Activated B cell treated with CpG ODN at 0.5 μM for 24 hours (primary cell): ENCODE measurements at regions of chr1 and their contacts with region 1.

Region 1: GRCh38 chr1:101238681-101239094 is 1.9 kb downstream of the S1PR1 start:
- DNase-seq: peak; percentile 78
- ATAC-seq: peak; percentile 28
- H3K4me3 Mint-ChIP-seq: peak overlapping the region; percentile 98
- H3K27ac Mint-ChIP-seq: peak overlapping the region; percentile 98
- H3K4me1 Mint-ChIP-seq: peaks cover 70% of the 10 kb centered on the region
- H3K27me3 Mint-ChIP-seq: no peaks in the 10 kb centered on the region
- CTCF ChIP-seq: peak; percentile 58

Region 2: GRCh38 chr1:100895540-100896483 is 342.9 kb before region 1 on chr1 and contains the start of gene SLC30A7:
- CTCF ChIA-PET with region 1: no interaction called
- POLR2A ChIA-PET with region 1: interaction called, 18 read pairs
- intact Hi-C with region 1: no loop called
- DNase-seq: peak; percentile 97
- ATAC-seq: peak; percentile 86
- H3K4me3 Mint-ChIP-seq: peak within 1 kb of the TSS; percentile 98
- H3K27ac Mint-ChIP-seq: peak within 1 kb of the TSS; percentile 95
- H3K4me1 Mint-ChIP-seq: peaks cover 29% of the 10 kb centered on the region
- H3K27me3 Mint-ChIP-seq: no peaks in the 10 kb centered on the region
- CTCF ChIP-seq: no peak
- total RNA-seq, gene SLC30A7: 21.1 and 25.7 TPM in 2 replicates

Region 3: DNA sequence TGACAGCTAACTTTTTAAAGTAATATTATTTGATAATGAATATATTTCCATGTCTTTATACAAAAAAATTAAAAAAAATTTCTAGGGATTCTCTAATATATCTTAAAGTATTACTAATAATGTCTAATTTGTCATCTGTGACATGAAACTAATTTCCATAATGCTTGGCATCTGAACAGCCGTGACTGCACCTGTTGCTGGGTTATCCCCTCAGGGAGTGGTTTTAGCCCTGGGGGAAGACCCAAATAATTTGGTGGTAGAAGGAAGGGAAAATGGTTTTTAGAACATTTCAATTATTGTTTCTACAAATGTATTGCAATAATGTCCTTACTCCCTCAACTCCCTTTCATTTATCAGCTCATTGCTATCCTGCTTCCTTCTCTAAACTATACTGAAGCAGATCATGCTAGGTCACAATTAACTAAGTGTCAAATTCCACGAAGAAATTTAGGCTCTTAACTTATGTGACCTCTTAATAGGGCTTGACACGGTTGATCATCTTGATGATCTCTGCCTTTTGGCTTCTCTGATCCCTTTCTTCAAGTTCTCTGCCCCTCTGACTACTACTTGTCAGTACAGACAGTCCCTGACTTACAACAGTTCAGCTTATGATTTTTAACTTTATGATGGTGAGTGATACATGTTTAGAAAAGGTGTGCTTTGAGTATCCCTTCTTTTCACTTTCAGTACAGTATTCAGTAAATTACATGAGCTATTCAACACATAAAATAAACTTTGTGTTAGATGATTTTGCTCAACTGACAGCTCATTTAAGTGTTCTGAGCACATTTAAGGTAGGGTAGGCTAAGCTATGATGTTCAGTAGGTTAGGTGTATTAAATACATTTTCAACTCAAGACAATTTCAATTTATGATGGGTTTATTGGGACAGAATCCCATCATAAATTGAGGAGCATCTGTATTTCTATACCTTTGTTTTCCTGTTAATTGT is 186.7 kb before region 1 on chr1:
- CTCF ChIA-PET with region 1: interaction called, 5 read pairs
- POLR2A ChIA-PET with region 1: interaction called, 36 read pairs
- intact Hi-C with region 1: loop called (anchors 1 kb)
- DNase-seq: peak; percentile 27
- ATAC-seq: peak; percentile 88
- H3K4me3 Mint-ChIP-seq: peak overlapping the region; percentile 78
- H3K27ac Mint-ChIP-seq: peak overlapping the region; percentile 95
- H3K4me1 Mint-ChIP-seq: peaks cover 70% of the 10 kb centered on the region
- H3K27me3 Mint-ChIP-seq: no peaks in the 10 kb centered on the region
- CTCF ChIP-seq: no peak

Region 4: GRCh38 chr1:101145449-101145820 is 93.3 kb before region 1 on chr1:
- CTCF ChIA-PET with region 1: interaction called, 96 read pairs
- POLR2A ChIA-PET with region 1: interaction called, 60 read pairs
- intact Hi-C with region 1: loop called (anchors 2 kb)
- DNase-seq: no peak
- ATAC-seq: peak; percentile 39
- H3K4me3 Mint-ChIP-seq: peak overlapping the region; percentile 21
- H3K27ac Mint-ChIP-seq: peak overlapping the region; percentile 74
- H3K4me1 Mint-ChIP-seq: peaks cover 15% of the 10 kb centered on the region
- H3K27me3 Mint-ChIP-seq: no peaks in the 10 kb centered on the region
- CTCF ChIP-seq: no peak

Region 5: DNA sequence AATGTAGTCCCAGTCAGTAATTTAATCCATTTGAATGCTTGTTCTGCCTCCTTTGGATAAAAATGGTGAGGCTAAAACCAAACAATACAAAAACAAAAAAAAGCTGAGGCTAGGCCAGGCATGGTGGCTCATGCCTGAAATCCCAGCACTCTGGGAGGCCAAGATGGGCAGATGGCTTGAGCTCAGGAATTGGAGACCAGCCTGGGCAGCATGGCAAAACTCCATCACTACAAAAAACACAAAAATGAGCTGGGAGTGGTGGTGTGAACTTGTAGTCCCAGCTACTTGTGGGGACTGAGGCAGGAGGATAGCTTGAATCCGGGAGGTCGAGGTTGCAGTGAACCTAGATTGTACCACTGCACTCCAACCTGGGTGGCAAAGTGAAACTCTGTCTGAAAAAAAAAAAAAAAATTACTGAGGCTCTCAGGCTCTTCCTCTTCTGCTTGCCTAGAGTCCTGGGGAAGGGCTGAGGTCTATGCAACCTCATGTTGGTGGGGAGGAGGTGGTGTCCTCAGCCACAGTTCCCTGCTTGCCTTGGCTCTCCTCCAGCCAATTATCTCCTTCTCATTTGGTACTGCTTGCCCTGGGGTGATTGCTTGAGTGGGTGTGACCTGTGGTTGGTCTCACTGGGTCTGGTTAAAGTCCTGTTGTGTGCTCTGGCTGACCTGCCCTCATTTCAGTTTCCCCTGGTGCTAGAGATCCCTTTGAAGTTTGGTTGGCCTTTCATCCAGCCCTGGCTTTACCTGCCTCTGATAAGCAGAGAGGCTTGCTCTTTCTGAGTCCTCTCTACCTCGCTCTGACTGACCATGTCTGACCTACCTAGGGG is 19.0 kb after region 1 on chr1:
- CTCF ChIA-PET with region 1: interaction called, 33 read pairs
- POLR2A ChIA-PET with region 1: interaction called, 5 read pairs
- intact Hi-C with region 1: loop called (anchors 2 kb)
- DNase-seq: no peak
- ATAC-seq: peak; percentile 61
- H3K4me3 Mint-ChIP-seq: no peak overlapping the region
- H3K27ac Mint-ChIP-seq: peak overlapping the region; percentile 42
- H3K4me1 Mint-ChIP-seq: peaks cover 51% of the 10 kb centered on the region
- H3K27me3 Mint-ChIP-seq: no peaks in the 10 kb centered on the region
- CTCF ChIP-seq: no peak

Region 6: GRCh38 chr1:101299141-101299540 is 60.5 kb after region 1 on chr1:
- CTCF ChIA-PET with region 1: interaction called, 3 read pairs
- POLR2A ChIA-PET with region 1: interaction called, 10 read pairs
- intact Hi-C with region 1: no loop called
- DNase-seq: no peak
- ATAC-seq: no peak
- H3K4me3 Mint-ChIP-seq: no peak overlapping the region
- H3K27ac Mint-ChIP-seq: no peak overlapping the region
- H3K4me1 Mint-ChIP-seq: peaks cover 14% of the 10 kb centered on the region
- H3K27me3 Mint-ChIP-seq: no peaks in the 10 kb centered on the region
- CTCF ChIP-seq: no peak

Region 7: DNA sequence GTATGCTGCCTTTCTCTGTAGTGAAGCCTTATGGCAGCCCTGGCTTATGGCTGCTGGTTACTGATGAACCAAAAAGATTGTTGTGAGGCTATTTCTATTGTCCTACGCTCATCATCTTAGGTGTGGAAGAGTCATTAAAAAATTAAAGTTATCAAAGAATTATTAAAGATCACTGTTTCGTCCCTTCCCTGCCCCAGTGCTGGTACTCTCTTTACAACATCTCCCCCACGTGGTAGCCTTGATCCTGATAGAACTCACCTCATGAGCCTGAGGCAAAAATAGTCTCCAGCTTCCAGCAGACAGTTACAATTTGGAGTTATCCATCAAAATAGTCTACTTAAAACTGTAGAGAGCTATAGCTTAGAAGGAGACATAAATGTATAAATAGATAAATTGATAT is 199.7 kb after region 1 on chr1:
- CTCF ChIA-PET with region 1: interaction called, 6 read pairs
- POLR2A ChIA-PET with region 1: interaction called, 4 read pairs
- intact Hi-C with region 1: loop called (anchors 1 kb)
- DNase-seq: no peak
- ATAC-seq: peak; percentile 29
- H3K4me3 Mint-ChIP-seq: no peak overlapping the region
- H3K27ac Mint-ChIP-seq: no peak overlapping the region
- H3K4me1 Mint-ChIP-seq: peaks cover 42% of the 10 kb centered on the region
- H3K27me3 Mint-ChIP-seq: no peaks in the 10 kb centered on the region
- CTCF ChIP-seq: no peak